ENCODE measurements at regions of chrX and their contacts with region 1.

Region 1: DNA sequence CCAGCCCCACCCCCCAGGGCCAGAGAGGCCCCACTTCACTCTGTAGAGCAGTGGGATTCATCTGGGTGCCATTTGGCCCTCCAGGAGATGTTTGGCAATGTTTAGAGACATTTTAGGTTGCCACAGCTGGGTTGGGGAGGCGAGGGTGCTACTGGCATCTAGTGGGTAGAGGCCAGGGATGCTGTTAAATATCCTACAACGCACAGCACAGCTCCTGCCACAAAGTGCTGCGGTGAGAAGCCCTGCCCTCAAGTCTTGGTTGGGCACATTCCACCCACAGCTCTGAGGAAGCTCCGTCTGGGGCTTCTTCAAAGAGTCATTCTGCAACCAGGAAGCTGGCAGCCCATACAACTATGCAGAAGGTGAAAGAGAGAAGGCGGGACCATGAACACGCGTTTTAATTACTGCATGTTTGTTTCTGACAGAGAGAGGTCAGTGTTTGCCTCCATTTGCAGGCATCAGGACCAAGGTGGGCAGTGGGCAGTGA is 48.1 kb upstream of the FAM9C start:
- DNase-seq: no peak

Region 2: DNA sequence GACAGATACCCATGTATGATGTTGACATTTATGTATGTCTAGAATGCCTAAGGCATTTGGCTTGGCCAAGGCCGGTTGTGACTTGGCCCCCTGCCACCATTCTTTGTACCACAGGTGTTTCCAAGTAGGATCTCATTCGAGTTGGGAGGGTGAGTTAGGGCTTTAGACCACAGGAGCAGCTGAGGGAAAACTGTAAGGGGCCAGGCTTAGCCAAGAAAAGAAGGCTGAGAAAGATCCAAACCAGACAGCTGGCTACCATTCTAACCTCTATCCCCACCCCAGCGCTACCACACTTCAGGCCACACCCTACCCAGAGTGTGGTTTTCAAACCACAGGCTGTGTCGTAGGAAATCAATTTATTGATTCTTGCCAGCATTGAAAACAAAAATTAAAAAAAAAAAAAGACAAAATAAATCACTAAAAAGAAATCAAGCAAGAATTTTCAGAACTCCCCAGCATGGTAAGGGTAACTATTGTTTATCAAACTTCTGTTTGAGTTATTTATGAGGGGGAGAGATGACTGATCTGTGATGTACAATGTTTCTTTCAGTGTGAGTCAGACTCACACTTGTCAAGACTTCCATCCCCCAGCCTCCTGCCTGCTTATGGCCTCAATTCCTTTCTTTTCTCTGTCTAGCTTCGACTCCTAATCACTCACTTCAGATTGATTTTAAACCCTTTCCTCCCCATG is 107.7 kb before region 1 on chrX:
- intact Hi-C with region 1: loop called in 1 of 2 experiments (anchors 10 kb)
- DNase-seq: no peak

Region 3: GRCh38 chrX:13180807-13181206 is 88.3 kb after region 1 on chrX:
- intact Hi-C with region 1: no loop called
- DNase-seq: no peak

Region 4: DNA sequence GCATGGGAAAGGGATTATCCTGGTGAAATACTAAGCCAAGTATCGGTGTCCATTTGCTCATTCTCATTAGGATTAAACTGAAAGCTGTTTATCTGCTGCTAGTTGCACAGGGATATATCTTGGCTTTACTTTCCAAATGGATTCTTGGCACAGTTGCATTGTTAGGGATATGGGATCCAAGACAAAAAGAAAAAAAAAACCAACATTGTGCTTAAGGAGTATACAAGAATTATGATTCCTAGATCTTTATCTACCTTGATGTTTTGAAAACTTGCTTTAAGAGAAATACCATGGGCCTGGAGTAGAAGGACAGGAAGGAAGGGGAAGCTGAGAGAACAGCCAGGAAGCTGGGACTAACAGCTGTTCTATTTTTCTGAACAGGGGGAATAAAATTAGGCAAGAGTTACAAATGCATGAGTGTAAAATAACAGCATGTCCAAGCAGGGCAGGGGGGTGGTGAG is 119.7 kb after region 1 on chrX:
- intact Hi-C with region 1: no loop called
- DNase-seq: no peak